ENCODE measurements at regions of chr5 and their contacts with region 1.

Region 1: DNA sequence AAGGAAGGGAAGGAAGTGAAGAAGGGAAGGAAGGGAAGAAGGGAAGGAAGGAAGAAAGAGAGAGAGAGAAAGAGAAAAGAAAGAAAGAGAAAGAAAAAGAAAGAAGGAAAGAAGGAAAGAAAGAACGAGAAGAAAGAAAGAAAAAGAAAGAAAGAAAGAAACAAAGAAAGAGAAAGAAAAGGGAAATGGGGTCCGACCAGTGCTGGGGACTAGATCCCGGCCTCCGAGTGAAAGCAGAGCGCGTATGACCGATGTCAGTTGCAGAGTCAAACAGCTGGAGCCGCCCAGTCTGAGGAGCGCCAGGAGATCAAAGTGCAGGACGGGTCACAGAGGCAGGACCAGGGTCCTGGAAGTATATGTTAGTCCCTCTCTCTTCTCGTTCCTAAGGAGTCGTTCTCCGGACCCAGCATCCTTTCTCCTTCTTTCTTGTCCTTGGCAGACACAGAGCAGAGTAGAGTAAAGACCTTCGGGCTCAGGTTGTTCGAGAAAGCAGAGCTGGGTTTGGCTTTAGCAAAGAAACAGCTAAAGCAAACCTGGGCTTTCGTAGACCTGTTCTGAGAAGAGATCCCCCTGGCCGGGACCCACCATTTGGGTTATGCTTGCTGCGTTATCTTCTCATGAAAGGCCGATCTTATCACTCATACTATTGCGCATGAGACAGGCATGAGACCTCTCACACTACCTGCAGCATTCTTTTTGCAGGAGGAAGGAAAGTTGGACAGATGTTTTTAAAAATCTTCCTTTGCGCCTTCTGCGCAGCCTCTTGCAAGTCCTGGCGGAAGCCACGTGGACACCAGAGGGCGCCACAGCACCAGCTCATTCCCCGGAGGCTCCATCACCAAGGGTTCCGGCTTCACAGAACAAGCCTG is 305.2 kb upstream of the MSX2 start:
- DNase-seq: peak; percentile 82 to 91
- ATAC-seq: peak; percentile 97 to 99
- H3K4me3 ChIP-seq: peak overlapping the region; percentile 36
- H3K27ac ChIP-seq: peak overlapping the region in 1 of 2 experiments; percentile 37; a peak in 2 of 6 replicates
- H3K4me1 ChIP-seq: peaks cover 5% of the 10 kb centered on the region; the same call in 1 of the 3 replicates
- CTCF ChIP-seq: peak; percentile 97
- EP300 ChIP-seq: no peak
- POLR2A ChIP-seq: no peak
- RAD21 ChIP-seq: peak; percentile 97 to 98

Region 2: GRCh38 chr5:174327317-174328236 is 91.6 kb before region 1 on chr5:
- CTCF ChIA-PET with region 1: interaction called, 17 read pairs
- POLR2A ChIA-PET with region 1: no interaction called
- DNase-seq: peak; percentile 78 to 83
- ATAC-seq: peak; percentile 75 to 94
- H3K4me3 ChIP-seq: no peak overlapping the region
- H3K27ac ChIP-seq: peak overlapping the region; percentile 17 to 73; a peak in 3 of 6 replicates
- H3K4me1 ChIP-seq: peaks cover 9% of the 10 kb centered on the region; the same call in 1 of the 3 replicates
- CTCF ChIP-seq: peak; percentile 85
- EP300 ChIP-seq: no peak
- POLR2A ChIP-seq: no peak
- RAD21 ChIP-seq: peak; percentile 74 to 76

Region 3: DNA sequence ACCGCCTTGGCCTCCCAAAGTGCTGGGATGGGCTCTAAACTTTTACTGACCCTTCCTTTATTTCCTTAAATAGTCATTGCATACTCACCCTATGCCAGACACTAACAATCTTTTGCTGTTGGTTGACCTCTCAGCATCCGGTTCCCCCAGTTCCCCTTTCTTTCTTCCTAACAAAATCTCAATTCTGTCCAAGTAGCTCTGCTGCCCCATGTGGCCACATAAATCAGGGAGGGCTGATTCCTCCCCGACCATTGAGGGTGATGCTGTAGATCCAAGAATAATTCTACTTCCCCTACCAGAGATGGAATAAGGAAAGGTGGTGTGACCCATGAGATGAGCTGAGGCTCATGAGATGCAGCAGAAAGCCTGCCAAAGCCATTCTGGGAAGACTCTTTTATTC is 10.1 kb before region 1 on chr5:
- CTCF ChIA-PET with region 1: interaction called, 63 read pairs
- POLR2A ChIA-PET with region 1: no interaction called
- DNase-seq: no peak
- ATAC-seq: peak in 1 of 2 experiments; percentile 40; a peak in 2 of 6 replicates
- H3K4me3 ChIP-seq: no peak overlapping the region
- H3K27ac ChIP-seq: no peak overlapping the region
- H3K4me1 ChIP-seq: peaks cover 36% of the 10 kb centered on the region; the same call in 2 of the 3 replicates
- CTCF ChIP-seq: peak; percentile 5; the same call in 1 of the 3 replicates
- EP300 ChIP-seq: no peak
- POLR2A ChIP-seq: no peak
- RAD21 ChIP-seq: no peak

Region 4: DNA sequence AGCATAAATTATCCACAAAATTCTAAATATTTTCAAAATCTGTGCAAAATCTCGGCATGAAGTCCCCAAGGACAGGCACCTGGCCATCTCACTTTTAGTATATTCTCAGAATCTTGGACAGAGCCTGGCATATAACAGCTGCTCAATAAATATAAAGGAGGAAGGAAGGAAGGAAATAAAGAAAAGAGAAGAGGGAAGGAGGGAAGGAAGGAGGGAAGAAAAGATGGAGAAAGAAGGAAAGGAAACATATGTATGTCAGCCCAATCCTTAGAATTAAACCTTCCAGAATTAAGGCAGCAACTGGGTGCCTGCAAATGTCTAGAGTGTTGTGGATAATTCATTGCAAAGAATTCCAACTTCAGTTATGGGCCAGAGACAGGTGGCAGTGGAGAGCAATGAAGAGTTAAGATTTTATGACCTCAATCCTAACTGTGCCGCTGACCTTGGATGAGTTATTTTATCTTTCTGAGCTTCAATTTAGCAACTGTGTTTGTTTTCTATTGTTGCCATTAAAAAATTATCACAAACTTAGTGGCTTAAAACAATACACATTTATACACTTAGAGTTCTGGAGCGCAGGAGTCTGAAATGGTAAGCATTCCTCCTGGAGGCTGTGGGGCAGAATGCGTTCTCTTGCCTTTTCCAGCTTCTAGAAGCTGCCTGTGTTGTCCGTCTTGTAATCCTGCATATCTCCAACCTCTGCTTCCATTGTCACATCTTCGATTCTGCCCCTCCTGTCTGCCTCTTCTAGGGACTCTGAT is 104.3 kb after region 1 on chr5:
- CTCF ChIA-PET with region 1: interaction called, 12 read pairs
- POLR2A ChIA-PET with region 1: no interaction called
- DNase-seq: peak in 1 of 2 experiments; percentile 18
- ATAC-seq: peak; percentile 70 to 76; a peak in 5 of 6 replicates
- H3K4me3 ChIP-seq: no peak overlapping the region
- H3K27ac ChIP-seq: no peak overlapping the region
- H3K4me1 ChIP-seq: no peaks in the 10 kb centered on the region
- CTCF ChIP-seq: peak; percentile 41; the same call in 2 of the 3 replicates
- EP300 ChIP-seq: no peak
- POLR2A ChIP-seq: no peak
- RAD21 ChIP-seq: peak; percentile 25; a peak in 3 of 5 replicates

Region 5: DNA sequence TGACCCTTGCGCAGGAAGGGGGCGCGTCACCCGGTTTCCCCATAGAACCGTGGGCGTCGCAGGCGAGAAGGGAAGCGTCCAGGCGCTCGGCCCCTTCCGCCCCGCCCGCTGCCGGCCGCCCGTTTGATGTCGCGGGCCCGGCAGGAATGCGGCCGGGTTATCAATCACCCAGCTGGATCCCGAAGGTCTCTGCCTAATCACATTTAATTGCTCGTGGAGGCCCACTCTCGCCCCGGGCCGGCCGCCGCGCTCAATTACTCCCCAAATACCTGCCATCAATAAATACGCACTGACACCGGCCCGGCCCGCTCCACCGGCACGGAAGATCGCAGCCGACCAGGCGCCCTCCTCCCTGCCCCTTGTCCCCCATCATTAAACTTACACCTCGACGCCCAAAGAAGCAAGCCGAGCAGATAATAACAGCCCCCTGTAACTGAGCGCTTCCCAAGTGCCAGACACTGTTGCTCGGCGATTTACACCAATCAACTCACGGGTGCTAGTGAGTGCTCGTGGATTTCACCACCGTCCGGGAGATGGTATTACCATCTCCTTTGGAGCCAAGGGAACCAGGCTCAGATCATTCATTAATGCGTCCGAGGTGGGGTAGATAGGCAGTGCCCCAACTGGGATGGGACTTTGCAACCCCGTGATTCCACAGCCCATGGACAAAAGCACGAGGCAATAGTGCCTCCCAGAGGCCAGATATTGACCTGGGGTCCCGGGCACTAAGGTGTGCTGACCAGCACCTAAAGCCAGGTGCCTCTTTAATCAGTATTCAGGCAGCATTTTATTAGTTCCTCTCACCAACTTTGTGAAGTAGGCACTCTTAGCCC is 316.6 kb after region 1 on chr5:
- CTCF ChIA-PET with region 1: interaction called, 100 read pairs
- POLR2A ChIA-PET with region 1: no interaction called
- DNase-seq: peak; percentile 34 to 76
- ATAC-seq: peak; percentile 84 to 92
- H3K4me3 ChIP-seq: peak overlapping the region; percentile 43
- H3K27ac ChIP-seq: peak overlapping the region in 1 of 2 experiments; percentile 44; a peak in 1 of 6 replicates
- H3K4me1 ChIP-seq: no peaks in the 10 kb centered on the region
- CTCF ChIP-seq: peak; percentile 86
- EP300 ChIP-seq: no peak
- POLR2A ChIP-seq: no peak
- RAD21 ChIP-seq: peak; percentile 88 to 93

Region 6: GRCh38 chr5:174793684-174794328 is 374.6 kb after region 1 on chr5:
- CTCF ChIA-PET with region 1: interaction called, 20 read pairs
- POLR2A ChIA-PET with region 1: no interaction called
- DNase-seq: peak in 1 of 2 experiments; percentile 17
- ATAC-seq: peak; percentile 75 to 87; a peak in 4 of 6 replicates
- H3K4me3 ChIP-seq: no peak overlapping the region
- H3K27ac ChIP-seq: no peak overlapping the region
- H3K4me1 ChIP-seq: no peaks in the 10 kb centered on the region
- CTCF ChIP-seq: peak; percentile 44
- EP300 ChIP-seq: no peak
- POLR2A ChIP-seq: no peak
- RAD21 ChIP-seq: peak; percentile 35 to 62; a peak in 3 of 5 replicates

Region 7: GRCh38 chr5:175059687-175060211 is 640.6 kb after region 1 on chr5:
- CTCF ChIA-PET with region 1: no interaction called
- POLR2A ChIA-PET with region 1: no interaction called
- DNase-seq: peak; percentile 58 to 76
- ATAC-seq: peak; percentile 87 to 90
- H3K4me3 ChIP-seq: peak overlapping the region; percentile 26
- H3K27ac ChIP-seq: peak overlapping the region in 1 of 2 experiments; percentile 49; a peak in 2 of 6 replicates
- H3K4me1 ChIP-seq: no peaks in the 10 kb centered on the region
- CTCF ChIP-seq: peak; percentile 34; the same call in 2 of the 3 replicates
- EP300 ChIP-seq: no peak
- POLR2A ChIP-seq: no peak
- RAD21 ChIP-seq: peak; percentile 8 to 37; a peak in 3 of 5 replicates